GM12878 (cell line): ENCODE measurements at regions of chr20 and their contacts with region 1.

Region 1: GRCh38 chr20:35699127-35699975 is at the starts of genes NFS1 and ROMO1:
- DNase-seq: peak; percentile 36
- ATAC-seq: peak; percentile 93
- H3K4me3 ChIP-seq: peak within 1 kb of the TSS; percentile 71
- H3K27ac ChIP-seq: peak within 1 kb of the TSS; percentile 87
- H3K4me1 ChIP-seq: peaks cover 11% of the 10 kb centered on the region; the same call in 1 of the 2 replicates
- H3K27me3 ChIP-seq: no peaks in the 10 kb centered on the region
- CTCF ChIP-seq: peak; percentile 13 to 24 (median 18); a peak in 3 of 6 replicates
- EP300 ChIP-seq: no peak
- POLR2A ChIP-seq: peak; percentile 90
- RAD21 ChIP-seq: no peak
- polyA plus RNA-seq, gene NFS1: 9.2 to 17.8 TPM
- polyA plus RNA-seq, gene ROMO1: 565 to 631 TPM

Region 2: DNA sequence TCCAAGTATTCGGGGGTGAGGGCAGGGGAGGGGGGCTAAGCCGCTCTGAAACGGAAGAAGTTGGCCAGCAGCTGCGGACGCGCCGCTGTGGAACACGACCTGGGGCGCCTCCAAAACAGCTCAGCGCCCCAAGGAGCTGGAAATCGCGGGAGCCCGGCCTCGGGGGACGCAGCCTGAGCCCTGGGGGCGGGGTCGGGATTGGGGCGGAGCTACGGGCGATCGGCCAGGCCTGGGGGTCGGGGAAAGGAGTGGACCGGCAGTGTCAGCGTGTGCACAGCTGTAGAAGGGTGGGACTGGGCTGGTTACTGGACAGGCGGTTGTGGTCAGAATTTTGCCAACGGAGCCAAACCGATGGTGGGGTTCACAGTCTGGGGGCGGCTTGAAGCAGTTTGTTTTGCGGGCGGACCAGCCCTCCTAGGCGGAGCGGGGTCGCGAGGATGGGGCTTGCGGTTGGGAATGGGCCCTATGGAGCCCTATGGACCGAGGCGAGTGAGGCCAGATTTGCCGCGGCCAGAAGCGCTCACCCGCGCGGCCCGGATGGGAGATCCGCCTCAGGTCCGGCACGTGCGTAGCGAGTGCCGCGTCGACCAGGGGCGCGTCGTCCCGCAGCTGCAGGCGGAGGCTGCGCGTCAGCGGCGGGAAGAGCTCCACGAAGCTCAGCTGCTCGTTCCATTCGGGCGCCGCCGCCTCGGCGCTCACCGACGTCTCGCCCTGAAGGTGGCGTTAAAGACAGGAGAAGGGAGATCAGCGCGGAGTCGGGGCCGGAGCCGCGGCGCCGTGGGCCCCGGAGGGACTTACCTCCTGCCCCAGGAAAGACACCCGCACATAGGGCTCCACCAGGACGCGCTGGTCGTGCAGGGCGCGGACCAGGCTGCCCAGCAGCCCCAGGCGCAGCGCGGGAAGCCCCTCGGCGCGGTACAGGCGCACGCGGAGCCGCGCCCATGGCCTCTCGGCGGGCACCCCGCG is 98.1 kb before region 1 on chr20:
- CTCF ChIA-PET with region 1: interaction called, 3 read pairs
- POLR2A ChIA-PET with region 1: no interaction called
- RAD21 ChIA-PET with region 1: interaction called, 4 read pairs
- SMC1A ChIA-PET with region 1: no interaction called
- in situ Hi-C with region 1: no loop called
- intact Hi-C with region 1: loop called (anchors 5 kb)
- DNase-seq: no peak
- ATAC-seq: peak; percentile 86
- H3K4me3 ChIP-seq: peak overlapping the region; percentile 57; the same call in 1 of the 2 replicates
- H3K27ac ChIP-seq: no peak overlapping the region
- H3K4me1 ChIP-seq: peaks cover 10% of the 10 kb centered on the region
- H3K27me3 ChIP-seq: peaks cover 9 to 11% of the 10 kb centered on the region in 2 experiments; a peak in 3 of 4 replicates
- CTCF ChIP-seq: peak; percentile 30 to 76 (median 49); a peak in 5 of 6 replicates
- EP300 ChIP-seq: no peak
- POLR2A ChIP-seq: no peak
- RAD21 ChIP-seq: peak; percentile 60

Region 3: DNA sequence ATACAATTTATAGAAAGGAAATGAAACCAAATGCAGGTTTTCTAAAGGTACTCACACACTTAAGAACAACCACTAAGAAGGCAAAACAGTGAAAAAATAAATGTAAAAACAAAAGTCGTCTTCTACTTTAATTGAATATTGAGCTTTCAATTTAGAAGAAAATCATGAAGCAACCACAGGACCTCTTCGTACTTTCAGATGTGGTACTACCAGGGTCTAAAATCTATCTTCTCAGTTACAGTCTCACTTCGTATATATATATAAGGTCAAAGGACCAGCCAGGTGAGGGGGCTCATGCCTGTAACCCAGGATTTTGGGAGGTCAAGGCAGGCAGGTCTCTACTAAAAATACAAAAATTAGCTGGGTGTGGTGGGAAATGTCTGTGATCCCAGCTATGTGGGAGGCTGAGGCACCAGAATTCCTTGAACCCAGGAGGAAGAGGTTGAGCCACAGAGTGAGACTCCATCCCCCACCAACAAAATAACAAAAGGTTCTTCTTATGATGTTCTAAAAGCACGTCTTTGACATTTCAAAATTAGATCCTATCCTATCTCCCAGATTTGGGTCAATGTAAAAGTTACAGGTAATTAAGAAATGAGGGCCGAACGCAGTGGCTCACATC is 12.3 kb after region 1 on chr20:
- CTCF ChIA-PET with region 1: interaction called, 4 read pairs
- POLR2A ChIA-PET with region 1: interaction called, 10 read pairs
- RAD21 ChIA-PET with region 1: no interaction called
- SMC1A ChIA-PET with region 1: interaction called, 4 read pairs
- in situ Hi-C with region 1: no loop called
- intact Hi-C with region 1: no loop called
- DNase-seq: no peak
- ATAC-seq: peak; percentile 39
- H3K4me3 ChIP-seq: no peak overlapping the region
- H3K27ac ChIP-seq: peak overlapping the region; percentile 37; the same call in 1 of the 2 replicates
- H3K4me1 ChIP-seq: peaks cover 16% of the 10 kb centered on the region
- H3K27me3 ChIP-seq: no peaks in the 10 kb centered on the region
- CTCF ChIP-seq: no peak
- EP300 ChIP-seq: no peak
- POLR2A ChIP-seq: no peak
- RAD21 ChIP-seq: no peak

Region 4: GRCh38 chr20:35757098-35757705 is 57.9 kb after region 1 on chr20:
- CTCF ChIA-PET with region 1: no interaction called
- POLR2A ChIA-PET with region 1: no interaction called
- RAD21 ChIA-PET with region 1: no interaction called
- SMC1A ChIA-PET with region 1: no interaction called
- in situ Hi-C with region 1: no loop called
- intact Hi-C with region 1: no loop called
- DNase-seq: no peak
- ATAC-seq: peak; percentile 49
- H3K4me3 ChIP-seq: no peak overlapping the region
- H3K27ac ChIP-seq: no peak overlapping the region
- H3K4me1 ChIP-seq: no peaks in the 10 kb centered on the region
- H3K27me3 ChIP-seq: no peaks in the 10 kb centered on the region
- CTCF ChIP-seq: no peak
- EP300 ChIP-seq: no peak
- POLR2A ChIP-seq: no peak
- RAD21 ChIP-seq: no peak

Region 5: GRCh38 chr20:35854713-35855434 is 155.5 kb after region 1 on chr20:
- CTCF ChIA-PET with region 1: no interaction called
- POLR2A ChIA-PET with region 1: no interaction called
- RAD21 ChIA-PET with region 1: no interaction called
- SMC1A ChIA-PET with region 1: no interaction called
- in situ Hi-C with region 1: no loop called
- intact Hi-C with region 1: no loop called
- DNase-seq: no peak
- ATAC-seq: no peak
- H3K4me3 ChIP-seq: no peak overlapping the region
- H3K27ac ChIP-seq: no peak overlapping the region
- H3K4me1 ChIP-seq: no peaks in the 10 kb centered on the region
- H3K27me3 ChIP-seq: no peaks in the 10 kb centered on the region
- CTCF ChIP-seq: no peak
- EP300 ChIP-seq: no peak
- POLR2A ChIP-seq: no peak
- RAD21 ChIP-seq: no peak

Region 6: GRCh38 chr20:35883778-35884540 is 184.6 kb after region 1 on chr20:
- CTCF ChIA-PET with region 1: interaction called, 11 read pairs
- POLR2A ChIA-PET with region 1: interaction called, 3 read pairs
- RAD21 ChIA-PET with region 1: interaction called, 4 read pairs
- SMC1A ChIA-PET with region 1: no interaction called
- in situ Hi-C with region 1: no loop called
- intact Hi-C with region 1: no loop called
- DNase-seq: no peak
- ATAC-seq: peak; percentile 97
- H3K4me3 ChIP-seq: no peak overlapping the region
- H3K27ac ChIP-seq: no peak overlapping the region
- H3K4me1 ChIP-seq: no peaks in the 10 kb centered on the region
- H3K27me3 ChIP-seq: no peaks in the 10 kb centered on the region
- CTCF ChIP-seq: peak; percentile 66 to 82 (median 77)
- EP300 ChIP-seq: no peak
- POLR2A ChIP-seq: no peak
- RAD21 ChIP-seq: peak; percentile 80